ENCODE measurements at regions of chr9 and their contacts with region 1.

Region 1: GRCh38 chr9:117718085-117718484 is 13.9 kb downstream of the TLR4 start:
- DNase-seq: peak; percentile 43
- H3K4me3 ChIP-seq: no peak overlapping the region
- H3K27ac ChIP-seq: no peak overlapping the region
- H3K4me1 ChIP-seq: peaks cover 4% of the 10 kb centered on the region
- H3K27me3 ChIP-seq: no peaks in the 10 kb centered on the region
- CTCF ChIP-seq: no peak

Region 2: DNA sequence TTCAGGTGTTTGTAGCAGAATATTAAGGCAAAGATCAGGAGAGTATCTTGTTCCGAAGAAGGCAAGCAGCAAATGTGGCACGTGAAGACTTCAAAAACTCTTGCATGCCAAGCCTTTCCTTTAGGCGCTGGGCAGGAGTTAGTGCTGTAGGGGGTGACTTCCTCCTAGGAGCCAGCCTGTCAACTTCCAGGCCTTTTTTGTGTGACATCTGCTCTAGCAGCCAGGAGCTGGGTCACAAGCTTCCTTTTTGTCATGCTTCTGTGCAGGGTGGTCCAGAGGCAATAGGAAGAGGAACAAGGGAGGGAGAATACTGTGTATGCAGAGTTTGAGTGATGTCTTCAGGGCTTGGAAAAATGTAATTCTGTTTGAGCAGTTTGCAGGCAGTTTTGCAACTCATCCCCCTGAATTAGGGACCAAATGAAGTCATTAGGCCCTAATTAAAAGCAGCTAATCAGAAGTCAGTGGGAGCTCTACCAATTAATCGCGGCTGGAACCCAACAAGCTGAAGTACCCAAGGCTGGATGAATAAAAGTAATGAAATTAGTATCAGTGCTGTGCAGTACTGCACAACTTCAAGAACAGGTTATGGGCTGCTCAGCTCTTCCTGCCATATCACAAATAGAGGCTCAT is 39.6 kb after region 1 on chr9:
- CTCF ChIA-PET with region 1: no interaction called
- dilution Hi-C with region 1: loop called (anchors 5 kb)
- in situ Hi-C with region 1: no loop called
- intact Hi-C with region 1: no loop called
- DNase-seq: no peak
- H3K4me3 ChIP-seq: no peak overlapping the region
- H3K27ac ChIP-seq: no peak overlapping the region
- H3K4me1 ChIP-seq: peaks cover 3% of the 10 kb centered on the region
- H3K27me3 ChIP-seq: no peaks in the 10 kb centered on the region
- CTCF ChIP-seq: no peak

Region 3: GRCh38 chr9:117782931-117783788 is 65.1 kb after region 1 on chr9:
- CTCF ChIA-PET with region 1: no interaction called
- dilution Hi-C with region 1: no loop called
- in situ Hi-C with region 1: no loop called
- intact Hi-C with region 1: no loop called
- DNase-seq: peak; percentile 71
- H3K4me3 ChIP-seq: peak overlapping the region; percentile 54 to 72 (median 55)
- H3K27ac ChIP-seq: no peak overlapping the region
- H3K4me1 ChIP-seq: peaks cover 7% of the 10 kb centered on the region
- H3K27me3 ChIP-seq: no peaks in the 10 kb centered on the region
- CTCF ChIP-seq: peak; percentile 92 to 93

Measured in mammary epithelial cell (primary cell).